Pancreas (tissue), 10 donors: ENCODE measurements at regions of chr17 and their contacts with region 1.

Region 1: GRCh38 chr17:9195961-9196716 is 174.8 kb downstream of the NTN1 start:
- DNase-seq: no peak
- ATAC-seq: peak in 3 of 4 donors; percentile 56 to 70 (median 70)
- H3K4me3 ChIP-seq: no peak overlapping the region
- H3K27ac ChIP-seq: no peak overlapping the region
- H3K4me1 ChIP-seq: no peaks in the 10 kb centered on the region
- H3K27me3 ChIP-seq: no peaks in the 10 kb centered on the region
- CTCF ChIP-seq: no peak

Region 2: GRCh38 chr17:9144502-9145249 is 51.5 kb before region 1 on chr17:
- intact Hi-C with region 1: loop called in 1 of 3 experiments (anchors 5 kb)
- DNase-seq: peak in 1 of 6 donors; percentile 20
- ATAC-seq: peak in 3 of 4 donors; percentile 46 to 58 (median 50)
- H3K4me3 ChIP-seq: no peak overlapping the region
- H3K27ac ChIP-seq: no peak overlapping the region
- H3K4me1 ChIP-seq: no peaks in the 10 kb centered on the region
- H3K27me3 ChIP-seq: no peaks in the 10 kb centered on the region
- CTCF ChIP-seq: no peak